ENCODE measurements at regions of chr3 and their contacts with region 1.

Region 1: DNA sequence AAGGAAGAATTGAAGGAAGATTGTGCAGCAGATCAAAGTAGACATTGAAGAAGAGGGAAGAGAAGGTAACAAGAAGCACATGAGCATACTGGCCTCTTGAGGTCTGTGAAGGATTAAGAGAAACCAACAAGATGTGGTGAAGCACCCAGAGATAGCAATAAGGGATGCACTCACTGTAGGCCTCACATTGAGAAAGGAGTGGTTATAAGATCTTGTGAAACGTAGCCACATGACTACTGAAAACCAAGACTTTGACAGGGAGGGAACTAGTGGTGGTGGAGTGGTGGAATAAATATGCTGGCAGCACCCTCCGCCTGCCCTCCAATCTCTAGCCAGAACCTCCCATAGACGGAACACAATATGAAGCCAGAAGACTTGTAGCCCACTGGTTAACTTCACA is 651.2 kb downstream of the DIPK2A start:
- DNase-seq: no peak
- ATAC-seq: no peak
- H3K4me3 ChIP-seq: no peak overlapping the region
- H3K27ac ChIP-seq: no peak overlapping the region
- H3K4me1 ChIP-seq: no peaks in the 10 kb centered on the region
- H3K27me3 ChIP-seq: no peaks in the 10 kb centered on the region
- CTCF ChIP-seq: no peak
- POLR2A ChIP-seq: no peak

Region 2: DNA sequence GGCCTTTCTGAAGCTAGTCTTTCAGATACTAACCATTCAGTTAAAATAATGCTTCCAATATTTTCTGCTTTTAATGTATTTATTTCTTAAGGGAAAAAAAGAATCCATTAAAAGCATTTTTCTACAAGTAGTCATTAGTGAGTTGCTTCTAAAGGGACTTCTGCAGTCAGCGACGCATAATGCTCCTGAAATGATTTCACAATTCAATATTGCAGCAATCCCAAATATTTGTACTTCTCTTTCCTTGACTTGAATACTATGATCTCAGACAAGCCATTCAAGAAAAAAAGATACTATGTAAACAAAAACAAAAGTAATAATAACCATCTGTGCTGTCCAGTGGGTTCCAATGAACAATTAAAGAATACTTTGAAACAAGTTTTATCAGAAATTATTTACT is 29.7 kb after region 1 on chr3:
- intact Hi-C with region 1: loop called in 1 of 10 experiments (anchors 2 kb)
- DNase-seq: no peak
- ATAC-seq: no peak
- H3K4me3 ChIP-seq: no peak overlapping the region
- H3K27ac ChIP-seq: no peak overlapping the region
- H3K4me1 ChIP-seq: no peaks in the 10 kb centered on the region
- H3K27me3 ChIP-seq: no peaks in the 10 kb centered on the region
- CTCF ChIP-seq: no peak
- POLR2A ChIP-seq: no peak

Measured in heart left ventricle (tissue), 16 donors.